Motor neuron (in vitro differentiated cells): ENCODE measurements at regions of chr4 and their contacts with region 1.

Region 1: GRCh38 chr4:37802068-37802666 is 24.3 kb upstream of the PGM2 start:
- ATAC-seq: peak; percentile 89 to 100 (median 100)
- H3K4me3 ChIP-seq: no peak overlapping the region
- H3K27ac ChIP-seq: no peak overlapping the region
- H3K4me1 ChIP-seq: peaks cover 0 to 3% of the 10 kb centered on the region in 2 donors

Region 2: GRCh38 chr4:37594108-37594507 is 208.1 kb before region 1 on chr4:
- in situ Hi-C with region 1: loop called in 1 of 9 experiments (anchors 10 kb)
- ATAC-seq: peak in 2 of 8 experiments; percentile 20 to 57
- H3K4me3 ChIP-seq: no peak overlapping the region
- H3K27ac ChIP-seq: no peak overlapping the region
- H3K4me1 ChIP-seq: no peaks in the 10 kb centered on the region

Region 3: DNA sequence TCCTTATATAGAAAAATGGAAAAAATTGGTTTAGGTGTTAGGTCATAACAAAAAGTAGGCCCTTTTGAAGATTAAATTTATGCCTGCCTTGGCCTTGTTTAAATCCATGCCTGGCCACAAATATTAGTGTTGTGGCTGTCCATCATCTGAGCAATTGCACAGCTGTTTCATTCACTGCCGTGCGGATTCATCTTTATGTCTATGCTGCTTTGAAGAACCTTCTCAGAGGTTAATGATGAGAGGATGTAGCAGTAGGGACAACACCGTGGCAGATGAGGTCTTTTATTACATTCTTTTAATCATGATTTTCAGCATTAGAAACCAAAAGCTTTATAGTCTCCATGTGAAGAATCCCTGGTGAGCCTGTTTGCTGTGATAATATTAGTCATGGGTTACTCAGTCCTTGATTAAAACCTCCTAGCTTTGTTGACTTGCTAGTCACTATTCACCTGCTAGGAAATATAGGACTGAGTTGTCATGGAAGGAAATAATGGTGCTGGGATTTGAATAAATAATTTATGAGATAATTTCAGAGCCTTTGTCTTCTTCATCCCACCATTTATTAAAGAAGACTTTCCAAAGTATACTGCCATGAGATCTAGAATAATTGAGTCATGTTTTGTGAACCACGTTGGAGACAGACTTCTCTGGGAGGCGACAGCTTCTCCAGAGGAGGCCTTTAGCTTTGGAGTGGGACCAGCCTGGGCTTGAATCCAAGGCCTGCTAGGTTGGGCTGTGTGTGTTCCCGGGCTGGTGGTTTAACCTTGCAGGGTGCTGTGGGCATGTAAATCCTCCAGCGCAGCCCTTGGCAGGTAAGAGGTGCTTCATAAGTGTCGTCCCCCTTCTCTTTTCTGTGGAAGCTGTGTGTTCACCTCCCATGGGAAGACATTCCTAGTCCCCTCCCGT is 211.5 kb after region 1 on chr4:
- in situ Hi-C with region 1: loop called in 1 of 9 experiments (anchors 25 kb)
- ATAC-seq: peak in 6 of 8 experiments; percentile 26 to 75 (median 64)
- H3K4me3 ChIP-seq: no peak overlapping the region
- H3K27ac ChIP-seq: peak overlapping the region in 1 of 2 donors; percentile 67
- H3K4me1 ChIP-seq: peaks cover 7 to 19% of the 10 kb centered on the region in 2 donors

Region 4: GRCh38 chr4:38034986-38035882 is 233.1 kb after region 1 on chr4:
- in situ Hi-C with region 1: loop called in 4 of 9 experiments (anchors 10 to 25 kb)
- ATAC-seq: peak in 3 of 8 experiments; percentile 43 to 56 (median 54)
- H3K4me3 ChIP-seq: no peak overlapping the region
- H3K27ac ChIP-seq: no peak overlapping the region
- H3K4me1 ChIP-seq: no peaks in the 10 kb centered on the region

Region 5: GRCh38 chr4:38723726-38724474 is 921.7 kb after region 1 on chr4:
- in situ Hi-C with region 1: loop called in 1 of 9 experiments (anchors 25 kb)
- ATAC-seq: peak in 3 of 8 experiments; percentile 49 to 57 (median 55)
- H3K4me3 ChIP-seq: no peak overlapping the region
- H3K27ac ChIP-seq: no peak overlapping the region
- H3K4me1 ChIP-seq: no peaks in the 10 kb centered on the region